Endothelial cell of umbilical vein (primary cell): ENCODE measurements at regions of chr4 and their contacts with region 1.

Region 1: DNA sequence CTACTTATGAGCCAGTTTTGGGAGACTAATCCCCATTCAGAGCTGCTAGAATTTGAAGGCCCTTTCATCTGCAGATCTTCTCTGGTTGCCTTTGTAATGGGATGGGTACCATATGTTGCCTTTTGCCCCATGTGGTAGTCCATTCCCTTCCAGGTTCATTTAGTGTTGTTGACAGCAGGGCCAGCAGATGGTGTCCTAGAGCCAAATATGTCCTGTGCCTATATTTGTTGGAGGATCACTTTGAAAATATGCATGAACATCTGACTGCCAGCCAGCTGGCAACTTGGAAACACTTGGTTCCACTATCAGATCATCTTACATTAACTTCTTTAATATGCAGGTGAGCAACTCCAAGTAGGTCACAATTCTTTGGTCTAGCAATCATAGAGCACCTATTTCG is 30.4 kb downstream of the CFAP299 start:
- DNase-seq: peak; percentile 23
- H3K4me3 ChIP-seq: no peak overlapping the region
- H3K27ac ChIP-seq: no peak overlapping the region
- H3K4me1 ChIP-seq: no peaks in the 10 kb centered on the region
- H3K27me3 ChIP-seq: peaks cover 0 to under 1% of the 10 kb centered on the region in 2 experiments
- CTCF ChIP-seq: peak; percentile 41 to 54
- POLR2A ChIP-seq: no peak

Region 2: DNA sequence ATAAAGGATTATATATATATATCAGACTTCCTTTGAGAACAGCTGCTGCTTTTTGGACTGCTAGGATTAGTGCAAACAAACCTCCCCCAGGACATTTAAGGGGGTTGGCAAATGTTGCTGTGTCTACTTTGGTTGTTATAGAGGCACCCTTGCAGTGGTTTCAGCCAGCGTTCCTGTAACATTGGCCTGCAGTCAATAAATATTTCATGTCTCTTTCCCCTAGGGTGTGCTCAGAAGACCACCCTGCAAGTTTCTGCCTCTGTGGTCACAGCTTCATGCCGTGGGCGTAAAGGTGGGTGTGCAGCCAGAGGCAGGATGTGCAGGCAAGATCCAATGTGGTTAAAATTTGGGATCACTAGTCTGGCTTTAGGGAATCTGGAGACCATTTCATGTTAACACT is 70.6 kb before region 1 on chr4:
- CTCF ChIA-PET with region 1: no interaction called
- POLR2A ChIA-PET with region 1: no interaction called
- dilution Hi-C with region 1: no loop called
- intact Hi-C with region 1: no loop called
- DNase-seq: no peak
- H3K4me3 ChIP-seq: no peak overlapping the region
- H3K27ac ChIP-seq: no peak overlapping the region
- H3K4me1 ChIP-seq: no peaks in the 10 kb centered on the region
- H3K27me3 ChIP-seq: peaks cover 2 to 20% of the 10 kb centered on the region in 2 experiments
- CTCF ChIP-seq: no peak
- POLR2A ChIP-seq: no peak

Region 3: GRCh38 chr4:80989921-80990544 is 624.1 kb after region 1 on chr4:
- CTCF ChIA-PET with region 1: interaction called, 20 read pairs
- POLR2A ChIA-PET with region 1: no interaction called
- dilution Hi-C with region 1: no loop called
- intact Hi-C with region 1: loop called (anchors 1 kb)
- DNase-seq: peak; percentile 57
- H3K4me3 ChIP-seq: no peak overlapping the region
- H3K27ac ChIP-seq: no peak overlapping the region
- H3K4me1 ChIP-seq: no peaks in the 10 kb centered on the region
- H3K27me3 ChIP-seq: no peaks in the 10 kb centered on the region
- CTCF ChIP-seq: peak; percentile 43 to 56
- POLR2A ChIP-seq: no peak

Region 4: GRCh38 chr4:81040012-81040659 is 674.2 kb after region 1 on chr4:
- CTCF ChIA-PET with region 1: interaction called, 21 read pairs
- POLR2A ChIA-PET with region 1: no interaction called
- dilution Hi-C with region 1: no loop called
- intact Hi-C with region 1: loop called (anchors 2 kb)
- DNase-seq: peak; percentile 12
- H3K4me3 ChIP-seq: no peak overlapping the region
- H3K27ac ChIP-seq: no peak overlapping the region
- H3K4me1 ChIP-seq: no peaks in the 10 kb centered on the region
- H3K27me3 ChIP-seq: no peaks in the 10 kb centered on the region
- CTCF ChIP-seq: peak; percentile 26 to 38
- POLR2A ChIP-seq: no peak

Region 5: GRCh38 chr4:81052119-81053068 is 686.5 kb after region 1 on chr4:
- CTCF ChIA-PET with region 1: interaction called, 5 read pairs
- POLR2A ChIA-PET with region 1: no interaction called
- dilution Hi-C with region 1: no loop called
- intact Hi-C with region 1: loop called (anchors 1 kb)
- DNase-seq: peak; percentile 52
- H3K4me3 ChIP-seq: no peak overlapping the region
- H3K27ac ChIP-seq: no peak overlapping the region
- H3K4me1 ChIP-seq: no peaks in the 10 kb centered on the region
- H3K27me3 ChIP-seq: no peaks in the 10 kb centered on the region
- CTCF ChIP-seq: peak; percentile 56
- POLR2A ChIP-seq: no peak

Region 6: DNA sequence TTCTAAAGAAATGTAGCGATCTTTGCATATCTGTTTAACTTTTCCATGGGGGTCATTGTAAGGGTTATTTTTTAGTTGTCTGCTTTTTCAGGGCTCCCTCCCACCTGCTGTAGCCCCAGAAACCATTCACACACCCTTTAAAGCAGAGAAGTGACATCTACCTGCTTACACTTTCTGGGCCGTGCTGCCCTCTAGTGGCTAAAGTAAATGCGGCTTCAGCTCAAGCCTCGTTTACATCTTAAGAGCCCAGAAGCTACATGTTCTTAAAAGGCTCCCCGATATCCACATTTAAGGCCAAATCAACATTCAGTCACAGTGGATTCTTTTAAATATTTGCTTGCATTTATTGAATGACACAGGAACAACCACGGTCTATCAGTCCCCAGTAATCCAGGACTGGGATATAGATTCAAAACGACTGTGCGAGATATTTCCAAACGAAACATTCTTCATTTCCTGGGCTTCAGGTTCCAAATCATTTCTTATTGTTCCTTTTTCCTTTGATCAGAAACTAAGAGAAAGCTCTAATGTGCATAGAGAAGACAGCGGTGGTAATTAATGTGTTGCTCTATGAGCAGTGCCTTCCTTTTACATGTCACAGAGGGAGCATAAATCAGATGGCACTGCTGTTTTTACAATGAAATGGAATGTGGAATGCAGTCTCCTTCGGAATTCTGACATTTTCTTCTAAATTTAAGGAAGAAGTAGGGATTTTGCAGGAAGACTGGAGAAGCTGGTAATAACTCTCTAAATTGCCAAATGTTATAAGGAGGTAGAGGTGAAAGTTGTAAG is 985.9 kb after region 1 on chr4:
- CTCF ChIA-PET with region 1: interaction called, 4 read pairs
- POLR2A ChIA-PET with region 1: no interaction called
- dilution Hi-C with region 1: no loop called
- intact Hi-C with region 1: loop called (anchors 5 kb)
- DNase-seq: peak; percentile 60
- H3K4me3 ChIP-seq: no peak overlapping the region
- H3K27ac ChIP-seq: no peak overlapping the region
- H3K4me1 ChIP-seq: no peaks in the 10 kb centered on the region
- H3K27me3 ChIP-seq: no peaks in the 10 kb centered on the region
- CTCF ChIP-seq: peak; percentile 88 to 89
- POLR2A ChIP-seq: no peak